Dendritic cell treated with granulocyte-macrophage colony-stimulating factor and Interleukin-4, amounts not matched to agents 40 ng/mL and 50 ng/mL, for 4 days (primary cell): ENCODE measurements at regions of chr7 and their contacts with region 1.

Region 1: GRCh38 chr7:29239638-29240037 is 45.1 kb downstream of the CHN2 start:
- H3K4me3 Mint-ChIP-seq: no peak overlapping the region
- H3K27ac Mint-ChIP-seq: no peak overlapping the region
- H3K4me1 Mint-ChIP-seq: peaks cover 47% of the 10 kb centered on the region
- H3K27me3 Mint-ChIP-seq: no peaks in the 10 kb centered on the region

Region 2: DNA sequence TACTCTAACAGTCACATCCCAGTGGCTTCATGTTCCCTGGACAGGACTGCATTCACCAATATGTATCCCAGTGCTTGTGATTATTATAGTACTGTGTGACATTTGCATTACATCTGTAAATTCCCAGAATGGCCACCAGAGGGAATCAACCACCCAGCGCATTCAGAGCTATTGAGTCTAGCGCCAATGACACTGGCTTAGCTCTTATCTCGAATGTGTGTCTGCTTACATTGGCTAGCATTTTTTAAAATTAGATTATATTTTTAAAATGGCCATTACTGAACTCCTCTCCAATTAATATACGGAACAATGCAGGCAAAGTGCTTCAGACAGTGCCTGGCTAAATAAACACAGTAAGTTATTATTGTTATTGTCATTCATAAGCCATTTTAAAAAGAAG is 317.8 kb before region 1 on chr7:
- intact Hi-C with region 1: loop called (anchors 5 kb)
- H3K4me3 Mint-ChIP-seq: no peak overlapping the region
- H3K27ac Mint-ChIP-seq: no peak overlapping the region
- H3K4me1 Mint-ChIP-seq: peaks cover 21% of the 10 kb centered on the region
- H3K27me3 Mint-ChIP-seq: peaks cover 20% of the 10 kb centered on the region